ENCODE measurements at regions of chr19 and their contacts with region 1.

Region 1: GRCh38 chr19:49502866-49503581 is 6.8 kb downstream of the RPS11 start:
- DNase-seq: peak; percentile 83
- H3K4me3 ChIP-seq: no peak overlapping the region
- H3K27ac ChIP-seq: no peak overlapping the region
- H3K4me1 ChIP-seq: peaks cover 28% of the 10 kb centered on the region
- H3K27me3 ChIP-seq: no peaks in the 10 kb centered on the region
- CTCF ChIP-seq: peak; percentile 41 to 70
- POLR2A ChIP-seq: no peak

Region 2: GRCh38 chr19:49555600-49556411 is 52.8 kb after region 1 on chr19:
- CTCF ChIA-PET with region 1: interaction called, 12 read pairs
- POLR2A ChIA-PET with region 1: no interaction called
- dilution Hi-C with region 1: no loop called
- intact Hi-C with region 1: no loop called
- DNase-seq: peak; percentile 30
- H3K4me3 ChIP-seq: no peak overlapping the region
- H3K27ac ChIP-seq: peak overlapping the region; percentile 89
- H3K4me1 ChIP-seq: peaks cover 22% of the 10 kb centered on the region
- H3K27me3 ChIP-seq: no peaks in the 10 kb centered on the region
- CTCF ChIP-seq: no peak
- POLR2A ChIP-seq: no peak